Esophagus muscularis mucosa (tissue), 4 donors: ENCODE measurements at regions of chr17 and their contacts with region 1.

Region 1: GRCh38 chr17:8151123-8151640 is 1.0 kb downstream of the PER1 start:
- DNase-seq: peak; percentile 96
- H3K4me3 ChIP-seq: peak overlapping the region; percentile 72 to 93 (median 84)
- H3K27ac ChIP-seq: peak overlapping the region; percentile 94 to 100 (median 100)
- H3K4me1 ChIP-seq: peaks cover 59 to 65% (median 64%) of the 10 kb centered on the region in 4 donors
- H3K27me3 ChIP-seq: no peaks in the 10 kb centered on the region
- CTCF ChIP-seq: peak in 2 of 3 experiments; percentile 4 to 11
- EP300 ChIP-seq: peak; percentile 79
- POLR2A ChIP-seq: no peak

Region 2: GRCh38 chr17:7844292-7845154 is 306.7 kb before region 1 on chr17:
- intact Hi-C with region 1: loop called (anchors 5 kb)
- DNase-seq: peak; percentile 98
- H3K4me3 ChIP-seq: peak overlapping the region; percentile 64 to 86 (median 73)
- H3K27ac ChIP-seq: peak overlapping the region; percentile 97 to 98 (median 98)
- H3K4me1 ChIP-seq: peaks cover 25 to 70% (median 58%) of the 10 kb centered on the region in 4 donors
- H3K27me3 ChIP-seq: no peaks in the 10 kb centered on the region
- CTCF ChIP-seq: peak in 1 of 3 experiments; percentile 7
- EP300 ChIP-seq: no peak
- POLR2A ChIP-seq: peak; percentile 78

Region 3: GRCh38 chr17:8409966-8410864 is 259.0 kb after region 1 on chr17:
- intact Hi-C with region 1: no loop called
- DNase-seq: peak; percentile 94
- H3K4me3 ChIP-seq: no peak overlapping the region
- H3K27ac ChIP-seq: no peak overlapping the region
- H3K4me1 ChIP-seq: peaks cover 0 to 8% (median 7%) of the 10 kb centered on the region in 4 donors
- H3K27me3 ChIP-seq: peaks cover 0 to 21% (median 0%) of the 10 kb centered on the region in 4 donors
- CTCF ChIP-seq: peak; percentile 83 to 87 (median 86)
- EP300 ChIP-seq: no peak
- POLR2A ChIP-seq: no peak